Vagina (tissue), 2 donors: ENCODE measurements at regions of chr19 and their contacts with region 1.

Region 1: GRCh38 chr19:44657211-44657921 is 13.7 kb downstream of the PVR start:
- DNase-seq: no peak
- H3K4me3 ChIP-seq: no peak overlapping the region
- H3K27ac ChIP-seq: no peak overlapping the region
- H3K4me1 ChIP-seq: peaks cover 9% of the 10 kb centered on the region
- H3K27me3 ChIP-seq: no peaks in the 10 kb centered on the region
- CTCF ChIP-seq: peak; percentile 68 to 89 (median 85)
- POLR2A ChIP-seq: no peak

Region 2: DNA sequence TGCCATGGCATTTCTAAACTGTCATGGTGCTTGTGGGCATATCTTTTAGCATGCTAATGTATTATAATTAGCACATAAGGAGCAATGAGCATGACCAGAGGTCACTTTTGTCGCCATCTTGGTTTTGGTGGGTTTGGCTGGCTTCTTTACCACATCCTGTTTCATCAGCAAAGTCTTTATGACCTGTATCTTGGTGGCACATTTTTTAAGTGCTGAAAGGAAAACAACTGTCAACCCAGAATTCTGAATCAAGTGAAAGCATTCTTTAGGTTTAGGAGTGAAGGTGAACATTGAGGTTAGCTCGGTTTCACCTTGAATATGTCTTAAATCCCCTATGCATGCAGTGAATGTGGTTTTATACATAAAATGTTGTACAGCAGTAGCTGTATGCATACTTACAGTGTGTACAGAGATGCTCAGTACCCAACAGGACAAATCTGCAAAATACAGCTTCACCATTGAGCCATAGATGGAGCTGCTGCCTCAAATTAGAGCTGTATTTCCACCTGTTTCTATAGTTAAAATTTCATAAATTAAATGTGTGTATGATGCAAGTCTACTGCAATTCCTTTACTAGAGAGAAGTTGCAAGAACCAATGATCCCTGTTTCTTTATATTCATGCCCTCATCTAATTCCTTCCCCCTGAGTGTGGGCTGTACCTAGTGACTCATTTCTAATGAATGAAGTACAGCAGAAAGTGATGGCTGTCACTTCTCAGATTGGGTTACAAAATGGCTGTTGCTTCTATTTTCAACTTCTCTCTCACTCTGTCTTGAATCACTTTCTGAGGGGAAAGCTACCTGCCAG is 69.2 kb before region 1 on chr19:
- intact Hi-C with region 1: loop called (anchors 5 kb)
- DNase-seq: no peak
- H3K4me3 ChIP-seq: no peak overlapping the region
- H3K27ac ChIP-seq: no peak overlapping the region
- H3K4me1 ChIP-seq: no peaks in the 10 kb centered on the region
- H3K27me3 ChIP-seq: no peaks in the 10 kb centered on the region
- CTCF ChIP-seq: no peak
- POLR2A ChIP-seq: no peak

Region 3: GRCh38 chr19:44770550-44771257 is 113.3 kb after region 1 on chr19:
- intact Hi-C with region 1: no loop called
- DNase-seq: peak in 1 of 2 donors; percentile 93
- H3K4me3 ChIP-seq: no peak overlapping the region
- H3K27ac ChIP-seq: peak overlapping the region; percentile 17
- H3K4me1 ChIP-seq: peaks cover 8% of the 10 kb centered on the region
- H3K27me3 ChIP-seq: no peaks in the 10 kb centered on the region
- CTCF ChIP-seq: peak; percentile 86 to 91 (median 90)
- POLR2A ChIP-seq: no peak